Activated CD4-positive, alpha-beta T cell treated with anti-CD3 and anti-CD28 coated beads for 36 hours (primary cell): ENCODE measurements at regions of chr11 and their contacts with region 1.

Region 1: DNA sequence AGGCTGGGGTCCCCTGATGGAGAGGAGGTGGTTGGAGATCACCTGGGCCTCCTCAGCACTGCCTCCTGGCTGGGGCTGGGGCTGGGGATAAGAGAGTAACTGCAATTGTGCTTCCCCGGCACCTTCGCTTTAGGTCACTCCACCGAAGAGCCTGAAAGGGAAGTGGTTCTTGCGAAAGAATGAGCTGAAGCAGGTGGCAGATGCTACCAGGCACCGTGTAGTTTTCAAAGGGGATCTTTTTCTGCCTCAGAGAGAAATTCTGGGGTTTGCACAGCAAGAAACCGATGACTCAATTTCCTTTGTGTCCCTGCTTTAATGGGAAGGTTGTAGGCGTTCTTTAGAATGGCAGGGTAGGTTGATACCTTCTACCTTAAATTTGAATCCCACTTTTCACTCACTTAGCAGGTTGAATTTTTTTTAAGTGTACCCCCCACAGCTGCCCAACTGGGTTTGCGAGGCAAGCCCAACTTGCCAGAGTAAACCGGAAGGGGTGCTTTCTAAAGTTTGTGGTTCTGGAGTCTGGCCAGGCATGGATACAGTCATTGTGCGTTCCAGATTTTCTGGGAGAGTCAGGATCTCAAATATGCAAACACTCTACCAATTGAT is 5.3 kb downstream of the CD44 start:
- DNase-seq: peak; percentile 80
- ATAC-seq: peak; percentile 49
- H3K4me3 Mint-ChIP-seq: peak overlapping the region; percentile 65
- H3K27ac Mint-ChIP-seq: peak overlapping the region; percentile 99
- H3K4me1 Mint-ChIP-seq: peaks cover 72% of the 10 kb centered on the region
- H3K27me3 Mint-ChIP-seq: no peaks in the 10 kb centered on the region

Region 2: GRCh38 chr11:34926101-34926830 is 218.0 kb before region 1 on chr11:
- CTCF ChIA-PET with region 1: interaction called, 3 read pairs
- POLR2A ChIA-PET with region 1: no interaction called
- intact Hi-C with region 1: loop called in 1 of 2 experiments (anchors 5 kb)
- DNase-seq: peak; percentile 8
- ATAC-seq: peak; percentile 68
- H3K4me3 Mint-ChIP-seq: no peak overlapping the region
- H3K27ac Mint-ChIP-seq: no peak overlapping the region
- H3K4me1 Mint-ChIP-seq: peaks cover 20% of the 10 kb centered on the region
- H3K27me3 Mint-ChIP-seq: no peaks in the 10 kb centered on the region

Region 3: DNA sequence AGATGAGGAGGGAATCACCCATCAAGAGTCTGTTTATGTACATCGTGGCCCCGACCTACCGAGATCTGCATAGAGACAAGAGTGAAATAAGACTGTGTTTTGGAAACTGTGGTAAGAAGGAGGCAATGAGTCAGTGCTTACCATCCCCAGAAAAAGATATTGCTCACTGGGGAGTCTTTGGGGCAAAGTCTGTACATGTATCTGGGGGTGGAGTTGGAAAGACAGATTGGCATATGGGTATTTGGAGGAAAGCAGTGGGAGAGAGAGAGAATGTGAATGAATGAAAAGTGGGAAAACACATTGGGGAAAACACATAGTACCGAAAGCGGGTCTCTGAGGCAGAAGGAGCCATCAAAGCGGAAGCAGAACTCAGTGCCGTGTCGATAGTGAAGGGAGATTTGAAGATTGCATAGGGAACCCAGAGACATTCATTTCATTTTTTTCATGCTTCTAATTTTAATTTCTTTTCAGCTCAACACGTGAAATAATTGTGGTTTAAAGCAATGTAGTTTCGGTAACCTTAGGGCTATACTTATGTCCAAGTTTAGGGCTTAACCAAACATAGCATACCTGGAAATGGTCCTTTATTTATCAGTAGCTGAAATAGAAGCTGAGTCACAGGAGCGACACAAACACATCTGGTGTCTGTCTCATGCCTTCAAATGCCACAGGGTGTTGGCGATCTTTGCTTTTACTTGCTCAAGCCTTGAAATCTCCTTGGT is 103.9 kb before region 1 on chr11:
- CTCF ChIA-PET with region 1: interaction called, 9 read pairs
- POLR2A ChIA-PET with region 1: interaction called, 10 read pairs
- intact Hi-C with region 1: loop called (anchors 1 kb)
- DNase-seq: peak; percentile 78
- ATAC-seq: peak; percentile 86
- H3K4me3 Mint-ChIP-seq: peak overlapping the region; percentile 79
- H3K27ac Mint-ChIP-seq: peak overlapping the region; percentile 98
- H3K4me1 Mint-ChIP-seq: peaks cover 80% of the 10 kb centered on the region
- H3K27me3 Mint-ChIP-seq: peaks cover 2% of the 10 kb centered on the region

Region 4: GRCh38 chr11:35165423-35166368 is 21.5 kb after region 1 on chr11:
- CTCF ChIA-PET with region 1: interaction called, 39 read pairs
- POLR2A ChIA-PET with region 1: interaction called, 49 read pairs
- intact Hi-C with region 1: loop called (anchors 1 kb)
- DNase-seq: peak; percentile 93
- ATAC-seq: peak; percentile 67
- H3K4me3 Mint-ChIP-seq: peak overlapping the region; percentile 64
- H3K27ac Mint-ChIP-seq: peak overlapping the region; percentile 98
- H3K4me1 Mint-ChIP-seq: peaks cover 100% of the 10 kb centered on the region
- H3K27me3 Mint-ChIP-seq: no peaks in the 10 kb centered on the region

Region 5: DNA sequence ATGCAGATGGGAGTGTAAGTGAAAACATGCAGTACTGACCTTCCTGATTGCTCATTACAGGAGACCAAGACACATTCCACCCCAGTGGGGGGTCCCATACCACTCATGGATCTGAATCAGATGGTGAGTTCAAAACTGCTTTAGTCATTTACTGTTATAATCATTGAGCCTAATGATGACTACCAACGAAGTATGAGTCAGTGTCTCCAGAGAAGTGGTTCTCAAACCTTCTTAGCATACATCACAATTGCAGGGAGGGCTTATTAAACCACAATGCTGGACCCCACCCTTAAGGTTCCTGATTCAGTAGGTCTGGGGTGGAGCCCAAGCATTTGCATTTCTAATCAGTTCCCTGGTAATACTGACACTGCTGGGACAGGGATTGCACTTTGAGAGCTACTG is 70.6 kb after region 1 on chr11:
- CTCF ChIA-PET with region 1: no interaction called
- POLR2A ChIA-PET with region 1: no interaction called
- intact Hi-C with region 1: loop called (anchors 2 kb)
- DNase-seq: peak; percentile 69
- ATAC-seq: peak; percentile 88
- H3K4me3 Mint-ChIP-seq: peak overlapping the region; percentile 5
- H3K27ac Mint-ChIP-seq: peak overlapping the region; percentile 86
- H3K4me1 Mint-ChIP-seq: peaks cover 72% of the 10 kb centered on the region
- H3K27me3 Mint-ChIP-seq: no peaks in the 10 kb centered on the region

Region 6: GRCh38 chr11:35391922-35392813 is 247.9 kb after region 1 on chr11:
- CTCF ChIA-PET with region 1: interaction called, 3 read pairs
- POLR2A ChIA-PET with region 1: no interaction called
- intact Hi-C with region 1: loop called in 1 of 2 experiments (anchors 1 kb)
- DNase-seq: peak; percentile 91
- ATAC-seq: peak; percentile 77
- H3K4me3 Mint-ChIP-seq: no peak overlapping the region
- H3K27ac Mint-ChIP-seq: no peak overlapping the region
- H3K4me1 Mint-ChIP-seq: peaks cover 29% of the 10 kb centered on the region
- H3K27me3 Mint-ChIP-seq: no peaks in the 10 kb centered on the region